Mammary epithelial cell (primary cell): ENCODE measurements at regions of chr10 and their contacts with region 1.

Region 1: DNA sequence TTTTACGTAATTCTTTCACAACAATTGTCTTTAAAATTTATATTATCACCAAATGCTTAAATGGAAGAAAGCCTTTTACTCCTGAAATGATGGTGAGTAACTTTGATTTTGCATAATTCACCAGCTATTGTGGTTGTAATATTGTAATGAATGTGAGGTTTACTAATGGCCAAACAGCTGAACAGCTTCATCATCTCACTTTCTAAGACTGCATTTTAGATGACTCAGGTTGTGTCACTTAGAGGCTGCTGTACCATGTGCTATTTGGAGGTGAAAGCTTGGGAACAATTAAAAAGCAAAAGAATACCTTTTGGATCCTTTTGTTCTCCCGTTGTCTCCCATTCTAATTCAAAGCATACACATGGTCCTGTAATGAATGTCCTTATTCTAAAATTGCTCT is 604.0 kb upstream of the PFKP start:
- DNase-seq: no peak
- H3K4me3 ChIP-seq: no peak overlapping the region
- H3K27ac ChIP-seq: no peak overlapping the region
- H3K4me1 ChIP-seq: no peaks in the 10 kb centered on the region
- H3K27me3 ChIP-seq: no peaks in the 10 kb centered on the region
- CTCF ChIP-seq: no peak

Region 2: DNA sequence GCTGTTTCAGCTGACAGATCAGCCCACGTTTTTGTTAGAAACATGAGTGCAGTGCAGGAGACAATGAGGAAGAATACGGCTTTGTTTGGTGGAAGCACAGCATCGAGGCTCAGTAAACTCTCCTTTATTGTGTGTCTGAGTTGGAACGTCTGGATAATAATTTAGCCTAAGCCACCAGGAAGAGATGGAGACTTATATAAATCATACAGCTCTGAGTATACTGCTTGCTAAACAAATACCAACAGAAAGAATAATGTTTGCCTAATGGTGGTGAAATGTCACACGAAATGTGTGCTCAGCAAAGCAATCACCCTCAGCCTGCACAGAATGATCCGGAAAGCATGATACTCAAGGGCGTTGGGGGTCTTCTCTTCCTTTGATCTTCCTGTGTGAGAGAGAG is 61.8 kb before region 1 on chr10:
- CTCF ChIA-PET with region 1: no interaction called
- dilution Hi-C with region 1: no loop called
- in situ Hi-C with region 1: no loop called
- intact Hi-C with region 1: no loop called
- DNase-seq: no peak
- H3K4me3 ChIP-seq: no peak overlapping the region
- H3K27ac ChIP-seq: no peak overlapping the region
- H3K4me1 ChIP-seq: no peaks in the 10 kb centered on the region
- H3K27me3 ChIP-seq: no peaks in the 10 kb centered on the region
- CTCF ChIP-seq: no peak

Region 3: GRCh38 chr10:2494399-2494798 is 31.1 kb after region 1 on chr10:
- CTCF ChIA-PET with region 1: no interaction called
- dilution Hi-C with region 1: loop called (anchors 5 kb)
- in situ Hi-C with region 1: no loop called
- intact Hi-C with region 1: no loop called
- DNase-seq: no peak
- H3K4me3 ChIP-seq: no peak overlapping the region
- H3K27ac ChIP-seq: no peak overlapping the region
- H3K4me1 ChIP-seq: no peaks in the 10 kb centered on the region
- H3K27me3 ChIP-seq: no peaks in the 10 kb centered on the region
- CTCF ChIP-seq: no peak

Region 4: DNA sequence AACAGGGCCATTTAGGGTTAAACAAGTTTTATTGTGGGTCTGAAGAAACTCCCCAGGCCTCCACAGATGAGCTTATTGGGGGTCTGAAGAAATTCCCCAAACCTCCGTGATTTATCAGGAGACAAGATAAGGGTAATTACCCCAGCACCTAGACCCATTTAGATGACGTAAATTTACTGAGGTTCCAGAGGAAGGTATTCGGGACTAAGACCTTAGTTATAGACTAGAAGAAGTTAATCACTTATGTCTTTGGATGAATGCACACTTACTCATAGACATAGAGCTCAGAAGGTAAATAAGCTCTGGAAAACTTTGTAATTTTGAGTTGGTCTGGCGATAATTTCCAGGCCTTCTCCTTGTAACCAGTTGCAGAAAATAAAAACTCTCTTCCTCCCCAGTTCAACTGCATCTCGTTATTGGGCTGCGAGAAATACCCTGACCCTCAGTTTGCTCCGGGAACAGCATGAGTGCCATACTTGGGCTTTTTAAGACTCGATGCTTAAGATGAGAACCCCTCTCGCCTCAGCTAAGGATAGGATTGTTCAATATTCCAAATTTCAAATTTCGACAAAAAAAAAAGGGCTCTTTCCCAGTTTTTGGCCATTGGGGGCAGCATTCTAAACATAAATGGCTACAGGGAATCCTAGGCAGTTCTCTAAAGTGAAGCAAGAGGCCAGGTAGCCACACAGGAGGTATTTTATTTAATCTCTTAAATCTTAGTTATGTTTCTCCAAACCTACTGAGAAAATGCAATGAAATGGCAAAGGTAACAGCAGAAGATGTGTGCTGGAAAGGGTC is 529.3 kb after region 1 on chr10:
- CTCF ChIA-PET with region 1: no interaction called
- dilution Hi-C with region 1: no loop called
- in situ Hi-C with region 1: no loop called
- intact Hi-C with region 1: no loop called
- DNase-seq: no peak
- H3K4me3 ChIP-seq: no peak overlapping the region
- H3K27ac ChIP-seq: no peak overlapping the region
- H3K4me1 ChIP-seq: no peaks in the 10 kb centered on the region
- H3K27me3 ChIP-seq: no peaks in the 10 kb centered on the region
- CTCF ChIP-seq: no peak